ENCODE measurements at regions of chr17 and their contacts with region 1.

Region 1: DNA sequence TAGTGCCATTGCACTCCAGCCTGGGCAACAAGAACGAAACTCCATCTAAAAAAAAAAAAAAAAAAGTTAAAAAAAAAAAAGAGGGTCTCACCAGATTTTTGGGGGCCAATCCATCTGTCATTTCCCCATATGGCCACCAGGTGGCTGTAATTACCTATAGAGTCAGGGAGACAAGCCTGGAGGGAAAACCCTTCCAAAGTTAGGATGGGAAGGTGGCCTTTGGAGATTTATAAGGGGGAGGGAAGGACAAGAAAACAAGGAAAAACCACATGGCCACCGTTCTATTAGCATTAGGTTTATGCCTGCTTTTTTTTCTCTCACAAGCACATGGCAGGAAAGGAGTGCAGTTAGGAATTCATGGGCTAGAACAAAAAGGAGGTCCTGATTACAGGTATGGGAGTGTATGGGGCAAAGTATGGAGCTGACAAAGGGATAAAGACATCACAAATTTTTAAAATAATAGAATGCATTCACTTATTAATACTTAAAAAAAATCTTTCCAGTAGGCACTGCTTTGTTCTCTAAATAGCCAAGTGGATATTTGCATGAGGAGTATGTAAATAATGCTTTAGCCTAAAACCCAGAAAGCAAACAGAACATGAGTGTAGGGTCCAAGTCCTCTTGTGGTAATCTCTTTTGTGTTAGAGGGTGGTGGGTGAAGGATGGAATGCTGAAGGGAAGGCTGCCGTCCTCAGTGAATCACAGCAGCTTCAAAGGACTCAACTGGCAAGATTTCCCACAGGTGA is 5.1 kb downstream of the CYB5D1 start:
- DNase-seq: no peak
- H3K4me3 ChIP-seq: no peak overlapping the region
- H3K27ac ChIP-seq: no peak overlapping the region
- H3K4me1 ChIP-seq: peaks cover 13% of the 10 kb centered on the region
- H3K27me3 ChIP-seq: no peaks in the 10 kb centered on the region
- CTCF ChIP-seq: peak; percentile 62 to 70

Region 2: GRCh38 chr17:7887482-7888183 is 24.8 kb after region 1 on chr17:
- CTCF ChIA-PET with region 1: no interaction called
- dilution Hi-C with region 1: no loop called
- in situ Hi-C with region 1: no loop called
- intact Hi-C with region 1: loop called (anchors 2 kb)
- DNase-seq: peak; percentile 92
- H3K4me3 ChIP-seq: peak overlapping the region; percentile 80 to 91 (median 90)
- H3K27ac ChIP-seq: peak overlapping the region; percentile 70
- H3K4me1 ChIP-seq: peaks cover 44% of the 10 kb centered on the region
- H3K27me3 ChIP-seq: no peaks in the 10 kb centered on the region
- CTCF ChIP-seq: no peak

Region 3: DNA sequence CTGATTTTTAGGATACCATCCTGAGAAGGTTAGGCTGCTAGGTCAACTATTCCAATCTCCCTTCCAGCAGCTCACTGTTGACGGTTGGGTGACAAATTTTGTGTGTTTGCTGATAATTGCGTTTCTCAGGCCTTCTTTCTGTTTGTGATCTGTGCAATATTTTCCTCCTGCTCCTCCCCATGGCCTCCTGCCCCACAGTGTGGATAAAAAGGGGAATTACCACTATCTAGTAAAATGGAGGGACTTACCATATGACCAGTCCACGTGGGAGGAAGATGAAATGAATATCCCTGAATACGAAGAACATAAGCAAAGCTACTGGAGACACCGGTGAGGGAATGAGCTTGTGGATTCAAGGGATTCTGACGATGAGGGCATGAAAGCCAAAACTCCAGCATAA is 34.9 kb after region 1 on chr17:
- CTCF ChIA-PET with region 1: no interaction called
- dilution Hi-C with region 1: no loop called
- in situ Hi-C with region 1: loop called in 1 of 2 experiments (anchors 5 kb)
- intact Hi-C with region 1: loop called (anchors 1 kb)
- DNase-seq: peak; percentile 31
- H3K4me3 ChIP-seq: no peak overlapping the region
- H3K27ac ChIP-seq: no peak overlapping the region
- H3K4me1 ChIP-seq: no peaks in the 10 kb centered on the region
- H3K27me3 ChIP-seq: no peaks in the 10 kb centered on the region
- CTCF ChIP-seq: peak; percentile 27 to 51

Region 4: DNA sequence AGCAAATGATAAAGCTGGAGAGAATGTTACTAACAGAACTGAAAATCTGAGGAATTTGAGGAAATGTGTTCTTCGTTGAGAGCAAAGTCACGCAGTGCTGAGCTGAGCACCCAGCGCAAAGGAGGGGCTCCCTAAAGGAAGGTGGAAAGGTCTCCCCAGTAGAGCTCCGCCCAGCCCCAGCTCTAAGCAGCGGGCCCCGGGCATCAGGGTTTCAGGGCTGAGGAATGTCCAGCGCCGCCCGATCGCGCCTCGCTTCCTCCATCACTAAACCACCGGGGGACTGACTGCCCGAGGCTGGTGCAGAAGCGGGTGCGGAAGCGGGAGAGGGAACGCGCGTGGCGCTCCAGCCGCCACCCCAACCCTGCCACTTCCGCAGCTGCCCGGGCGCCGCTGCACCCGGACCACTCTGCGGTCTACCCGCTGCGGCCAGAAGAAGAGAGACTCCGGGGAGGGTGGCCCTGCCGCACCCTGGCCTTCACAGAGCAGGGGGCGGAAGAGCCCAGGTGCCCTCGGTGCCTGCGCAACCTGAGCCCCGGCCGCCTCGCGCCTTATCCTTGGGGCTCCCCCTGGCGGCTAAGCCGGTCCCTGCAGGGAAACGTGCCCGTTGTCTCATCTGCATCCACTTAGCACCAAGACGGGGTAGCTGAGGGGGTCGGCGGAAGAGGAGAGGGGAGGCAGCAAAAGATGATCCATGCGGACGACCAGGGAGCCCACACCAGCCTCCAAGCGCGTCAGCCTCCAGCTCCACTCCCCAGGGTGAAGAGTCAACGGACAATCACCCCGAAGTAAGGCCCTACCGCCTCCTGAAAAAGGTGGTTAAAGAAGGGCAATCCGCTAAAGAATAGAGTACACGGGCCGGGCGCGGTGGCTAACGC is 127.2 kb after region 1 on chr17:
- CTCF ChIA-PET with region 1: no interaction called
- dilution Hi-C with region 1: no loop called
- in situ Hi-C with region 1: no loop called
- intact Hi-C with region 1: loop called (anchors 1 kb)
- DNase-seq: peak; percentile 65
- H3K4me3 ChIP-seq: peak overlapping the region; percentile 55 to 76 (median 55)
- H3K27ac ChIP-seq: peak overlapping the region; percentile 26
- H3K4me1 ChIP-seq: peaks cover 21% of the 10 kb centered on the region
- H3K27me3 ChIP-seq: no peaks in the 10 kb centered on the region
- CTCF ChIP-seq: peak; percentile 85 to 96

Region 5: DNA sequence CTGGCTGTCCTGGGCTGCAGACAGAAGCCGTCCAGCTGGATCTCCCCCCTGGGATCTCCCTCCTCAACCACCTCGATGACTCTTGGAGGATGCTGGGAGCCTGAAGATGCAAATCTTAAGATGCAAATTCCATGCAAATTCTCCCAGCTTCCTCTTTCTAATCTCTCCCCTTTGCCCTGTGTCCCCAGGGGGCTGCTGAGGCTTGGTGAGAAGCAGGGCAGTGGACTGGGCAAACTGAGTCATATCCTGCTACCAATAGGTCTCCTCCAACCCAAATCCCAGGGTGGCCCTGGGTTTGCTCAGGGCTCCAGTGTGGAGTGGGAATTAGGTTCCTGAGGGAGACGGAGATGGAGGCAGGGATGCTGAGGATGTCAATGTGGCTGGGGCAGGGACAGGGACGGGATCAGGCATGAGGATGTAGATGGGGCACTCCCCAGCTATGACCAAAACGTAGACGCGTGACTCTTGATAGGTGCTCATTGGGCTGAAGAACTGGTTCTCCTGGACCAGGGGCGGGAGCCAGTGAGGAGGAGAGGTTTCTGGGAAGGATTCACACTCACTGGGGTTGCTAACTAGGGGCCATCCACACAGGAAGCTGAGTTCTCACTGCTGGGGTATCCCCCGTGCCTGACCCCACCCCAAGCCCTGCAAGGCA is 228.3 kb after region 1 on chr17:
- CTCF ChIA-PET with region 1: no interaction called
- dilution Hi-C with region 1: no loop called
- in situ Hi-C with region 1: no loop called
- intact Hi-C with region 1: no loop called
- DNase-seq: no peak
- H3K4me3 ChIP-seq: no peak overlapping the region
- H3K27ac ChIP-seq: no peak overlapping the region
- H3K4me1 ChIP-seq: peaks cover 8% of the 10 kb centered on the region
- H3K27me3 ChIP-seq: no peaks in the 10 kb centered on the region
- CTCF ChIP-seq: no peak

Measured in mammary epithelial cell (primary cell).